ENCODE measurements at regions of chr7 and their contacts with region 1.

Region 1: GRCh38 chr7:4830176-4830575 is 31.7 kb downstream of the PAPOLB start:
- DNase-seq: peak; percentile 86
- H3K4me3 ChIP-seq: no peak overlapping the region
- H3K27ac ChIP-seq: no peak overlapping the region
- H3K4me1 ChIP-seq: no peaks in the 10 kb centered on the region
- H3K27me3 ChIP-seq: no peaks in the 10 kb centered on the region
- CTCF ChIP-seq: peak; percentile 53 to 93 (median 63)
- EP300 ChIP-seq: no peak
- POLR2A ChIP-seq: no peak

Region 2: DNA sequence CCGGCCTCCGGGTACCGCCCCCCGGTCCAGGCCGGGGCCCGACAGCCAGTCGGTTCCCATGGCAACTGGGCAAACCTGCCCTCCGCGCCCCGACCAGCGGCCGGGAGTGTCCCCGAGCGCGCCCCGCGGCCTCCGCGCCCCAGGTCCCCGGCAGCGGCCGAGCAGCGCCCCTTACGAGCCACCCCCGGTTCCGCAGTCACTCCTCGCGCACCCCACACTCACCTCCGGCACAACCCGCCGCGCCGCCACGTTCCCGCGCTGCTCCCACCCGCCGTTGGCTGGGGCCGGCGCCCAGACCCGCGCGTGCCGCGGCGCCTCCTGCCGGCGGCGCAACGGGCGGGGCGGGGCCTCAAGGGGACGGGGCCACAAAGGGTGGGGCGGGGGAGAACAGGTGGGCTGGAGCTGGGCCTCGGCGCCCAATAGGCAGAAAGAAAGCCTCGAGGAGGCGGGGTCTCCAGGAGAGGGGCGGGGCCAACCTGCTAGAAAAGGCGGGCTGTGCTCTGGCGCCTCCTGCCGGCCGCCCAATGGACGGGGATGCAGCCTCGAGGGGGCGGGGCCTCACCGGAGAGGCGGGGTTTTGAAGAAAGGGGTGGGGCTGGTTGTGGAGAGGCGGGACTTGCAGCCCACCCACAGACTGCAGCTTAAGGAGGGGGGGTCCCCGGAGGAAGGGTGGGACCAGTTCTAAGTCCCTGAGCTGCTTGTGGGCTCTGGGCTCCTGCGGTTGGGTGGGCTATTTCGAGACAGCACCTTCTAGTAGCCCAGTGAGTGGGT is 53.4 kb after region 1 on chr7 and contains the start of gene RADIL:
- intact Hi-C with region 1: loop called (anchors 2 kb)
- DNase-seq: peak; percentile 97
- H3K4me3 ChIP-seq: peak within 1 kb of the TSS; percentile 37 to 82 (median 76)
- H3K27ac ChIP-seq: peak within 1 kb of the TSS; percentile 67 to 82 (median 79)
- H3K4me1 ChIP-seq: peaks cover 0 to 33% (median 22%) of the 10 kb centered on the region in 4 donors
- H3K27me3 ChIP-seq: peaks cover 0 to 11% (median 8%) of the 10 kb centered on the region in 3 donors
- CTCF ChIP-seq: peak; percentile 50 to 75 (median 60)
- EP300 ChIP-seq: no peak
- POLR2A ChIP-seq: no peak
- total RNA-seq, gene RADIL: 5.6 to 10.8 (median 6.7) TPM

Region 3: DNA sequence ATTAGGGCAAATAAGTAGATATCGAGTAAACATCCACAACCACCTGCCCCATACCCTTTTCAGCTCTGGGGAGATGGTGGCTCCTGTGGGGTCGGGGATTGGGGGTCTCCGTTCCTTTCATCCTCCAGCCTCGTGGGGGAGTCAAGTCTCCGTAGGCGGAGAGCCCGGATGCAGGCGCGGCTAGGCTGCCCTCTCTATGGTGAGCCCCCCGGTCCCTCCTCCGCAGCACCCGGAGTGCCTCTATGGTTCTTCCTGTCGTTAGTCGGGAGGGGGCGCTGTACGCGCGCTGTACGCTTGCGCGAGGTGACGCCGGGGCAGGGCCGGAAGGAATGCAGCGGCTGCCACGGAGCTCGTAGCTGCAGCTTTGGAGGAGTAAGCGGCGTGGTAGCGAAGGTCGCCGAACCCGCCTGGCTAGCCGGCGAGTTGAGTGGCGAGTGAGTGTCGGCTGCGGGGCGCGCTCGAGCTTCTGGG is 143.6 kb after region 1 on chr7:
- intact Hi-C with region 1: loop called (anchors 5 kb)
- DNase-seq: peak; percentile 93
- H3K4me3 ChIP-seq: peak overlapping the region; percentile 65 to 81 (median 69)
- H3K27ac ChIP-seq: peak overlapping the region; percentile 83 to 93 (median 88)
- H3K4me1 ChIP-seq: peaks cover 0 to 19% (median 17%) of the 10 kb centered on the region in 4 donors
- H3K27me3 ChIP-seq: no peaks in the 10 kb centered on the region
- CTCF ChIP-seq: peak; percentile 66 to 78 (median 71)
- EP300 ChIP-seq: no peak
- POLR2A ChIP-seq: no peak

Region 4: DNA sequence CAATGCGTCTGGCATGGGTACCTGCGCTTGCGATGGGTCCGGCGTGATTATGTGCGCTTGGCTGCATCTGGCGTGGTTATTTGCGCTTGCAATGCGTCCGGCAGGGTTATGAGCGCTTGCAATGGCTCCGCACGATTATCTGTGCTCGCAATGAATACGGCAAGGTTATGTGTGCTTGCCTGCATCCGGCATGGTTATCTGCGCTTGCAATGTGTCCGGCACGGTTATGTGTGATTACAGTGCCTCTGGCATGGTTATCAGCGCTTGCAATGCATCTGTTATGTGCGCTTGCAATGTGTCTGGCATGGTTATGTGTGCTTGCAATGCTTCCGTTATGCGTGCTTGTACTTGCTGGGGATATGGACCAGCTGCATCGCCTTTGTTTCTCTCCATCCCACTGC is 253.1 kb after region 1 on chr7:
- intact Hi-C with region 1: loop called (anchors 10 kb)
- DNase-seq: no peak
- H3K4me3 ChIP-seq: no peak overlapping the region
- H3K27ac ChIP-seq: no peak overlapping the region
- H3K4me1 ChIP-seq: peaks cover 0 to 6% (median 2%) of the 10 kb centered on the region in 4 donors
- H3K27me3 ChIP-seq: peaks cover 0 to 21% (median 6%) of the 10 kb centered on the region in 3 donors
- CTCF ChIP-seq: no peak
- EP300 ChIP-seq: no peak
- POLR2A ChIP-seq: no peak